ENCODE measurements at regions of chr20 and their contacts with region 1.

Region 1: GRCh38 chr20:16821211-16822089 is 73.3 kb downstream of the OTOR start:
- DNase-seq: no peak
- ATAC-seq: peak; percentile 78
- H3K4me3 ChIP-seq: no peak overlapping the region
- H3K27ac ChIP-seq: no peak overlapping the region
- H3K4me1 ChIP-seq: no peaks in the 10 kb centered on the region
- H3K27me3 ChIP-seq: no peaks in the 10 kb centered on the region
- CTCF ChIP-seq: peak; percentile 74 to 95 (median 90)
- EP300 ChIP-seq: no peak
- POLR2A ChIP-seq: no peak
- RAD21 ChIP-seq: peak; percentile 59

Region 2: DNA sequence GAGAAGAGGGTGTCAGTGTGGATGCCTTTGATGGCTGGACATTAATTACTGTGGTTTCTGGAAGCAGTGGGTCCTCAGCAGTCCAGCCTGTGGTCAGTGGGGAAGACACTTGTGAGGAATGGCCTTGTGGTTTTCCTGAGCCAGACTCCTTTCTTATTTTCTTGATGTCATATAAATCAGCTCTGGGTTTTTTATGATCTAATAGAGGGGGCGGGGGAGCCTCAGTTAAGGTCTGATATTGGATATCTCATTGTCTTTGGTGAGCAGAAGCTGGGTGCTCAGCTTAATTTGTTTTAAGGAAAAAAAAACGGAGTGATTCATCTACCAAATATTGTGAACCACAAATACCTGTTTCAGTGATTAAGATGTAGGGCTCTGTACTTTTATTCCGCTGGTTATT is 11.2 kb before region 1 on chr20:
- CTCF ChIA-PET with region 1: interaction called, 67 read pairs
- POLR2A ChIA-PET with region 1: no interaction called
- RAD21 ChIA-PET with region 1: no interaction called
- SMC1A ChIA-PET with region 1: interaction called, 3 read pairs
- in situ Hi-C with region 1: no loop called
- intact Hi-C with region 1: no loop called
- DNase-seq: no peak
- ATAC-seq: no peak
- H3K4me3 ChIP-seq: no peak overlapping the region
- H3K27ac ChIP-seq: no peak overlapping the region
- H3K4me1 ChIP-seq: no peaks in the 10 kb centered on the region
- H3K27me3 ChIP-seq: no peaks in the 10 kb centered on the region; a peak in 2 of 4 replicates
- CTCF ChIP-seq: no peak
- EP300 ChIP-seq: no peak
- POLR2A ChIP-seq: no peak
- RAD21 ChIP-seq: no peak

Region 3: DNA sequence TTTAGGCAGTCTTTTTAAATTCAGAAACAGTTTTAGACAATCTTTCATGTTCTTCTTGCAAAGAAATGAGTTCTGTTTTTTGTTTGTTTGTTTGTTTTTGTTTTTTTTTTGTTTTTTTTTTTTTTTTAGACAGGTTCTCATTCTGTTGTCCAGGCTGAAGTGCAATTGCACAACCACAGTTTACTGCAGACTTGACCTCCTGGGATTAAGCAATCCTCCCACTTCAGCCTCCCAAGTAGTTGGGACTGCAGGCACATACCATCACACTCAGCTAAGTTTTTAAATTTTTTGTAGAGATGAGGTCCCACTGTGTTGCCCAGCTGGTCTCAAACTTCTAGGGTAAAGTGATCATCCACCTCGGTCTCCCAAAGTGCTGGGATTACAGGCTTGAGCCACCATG is 23.0 kb after region 1 on chr20:
- CTCF ChIA-PET with region 1: interaction called, 12 read pairs
- POLR2A ChIA-PET with region 1: no interaction called
- RAD21 ChIA-PET with region 1: no interaction called
- SMC1A ChIA-PET with region 1: no interaction called
- in situ Hi-C with region 1: no loop called
- intact Hi-C with region 1: no loop called
- DNase-seq: no peak
- ATAC-seq: no peak
- H3K4me3 ChIP-seq: no peak overlapping the region
- H3K27ac ChIP-seq: no peak overlapping the region
- H3K4me1 ChIP-seq: no peaks in the 10 kb centered on the region
- H3K27me3 ChIP-seq: no peaks in the 10 kb centered on the region
- CTCF ChIP-seq: no peak
- EP300 ChIP-seq: no peak
- POLR2A ChIP-seq: no peak
- RAD21 ChIP-seq: no peak

Measured in GM12878 (cell line).